Common myeloid progenitor, CD34-positive (primary cell): ENCODE measurements at regions of chr12 and their contacts with region 1.

Region 1: DNA sequence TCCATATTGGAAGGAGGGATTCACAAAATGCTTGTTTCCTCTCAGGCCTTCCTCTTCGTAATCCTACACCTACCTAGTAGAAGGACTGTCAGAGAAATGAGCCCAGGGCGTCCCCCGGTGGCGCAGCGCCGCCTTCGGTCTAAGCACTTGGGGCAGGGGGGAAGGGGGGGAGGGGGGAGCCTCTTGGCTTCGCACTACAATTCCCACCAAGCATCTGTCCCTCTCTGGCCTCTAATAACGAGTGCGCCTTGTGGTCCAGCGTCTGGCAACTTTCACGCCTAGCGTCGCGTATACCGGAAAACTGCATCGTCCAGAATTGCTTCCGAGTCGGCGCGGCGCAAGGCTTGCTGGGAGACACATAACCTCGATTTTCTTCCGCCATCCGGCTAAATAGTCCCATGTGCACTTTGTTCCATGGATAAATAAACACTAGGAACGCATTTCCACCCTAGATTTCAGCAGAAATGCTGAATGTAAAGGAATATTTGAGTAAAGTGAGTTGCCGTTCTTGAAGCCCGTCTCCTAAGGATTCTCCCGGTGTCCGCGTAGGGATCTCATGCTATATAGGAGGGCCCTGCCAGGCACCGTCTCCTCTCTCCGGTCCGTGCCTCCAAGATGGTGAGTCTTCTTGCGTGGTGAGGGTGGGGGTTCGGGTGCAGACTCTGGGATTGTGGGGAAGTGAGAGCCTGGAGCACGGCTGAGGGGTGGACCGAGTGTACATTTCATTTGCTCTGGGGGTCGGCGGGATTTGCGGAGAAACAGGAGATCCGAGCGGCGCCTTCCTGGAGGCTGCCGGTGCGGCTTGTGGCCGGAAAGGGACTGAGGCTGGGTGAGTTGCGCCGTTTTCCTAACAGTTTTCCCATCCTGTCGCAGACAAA is at the start of gene RPS26:
- DNase-seq: peak; percentile 99 to 100 (median 100)
- H3K4me3 ChIP-seq: peak within 1 kb of the TSS; percentile 89 to 99 (median 97)
- H3K27ac ChIP-seq: peak within 1 kb of the TSS; percentile 92 to 97
- H3K4me1 ChIP-seq: peaks cover 6 to 24% (median 15%) of the 10 kb centered on the region in 4 experiments
- H3K27me3 ChIP-seq: no peaks in the 10 kb centered on the region

Region 2: DNA sequence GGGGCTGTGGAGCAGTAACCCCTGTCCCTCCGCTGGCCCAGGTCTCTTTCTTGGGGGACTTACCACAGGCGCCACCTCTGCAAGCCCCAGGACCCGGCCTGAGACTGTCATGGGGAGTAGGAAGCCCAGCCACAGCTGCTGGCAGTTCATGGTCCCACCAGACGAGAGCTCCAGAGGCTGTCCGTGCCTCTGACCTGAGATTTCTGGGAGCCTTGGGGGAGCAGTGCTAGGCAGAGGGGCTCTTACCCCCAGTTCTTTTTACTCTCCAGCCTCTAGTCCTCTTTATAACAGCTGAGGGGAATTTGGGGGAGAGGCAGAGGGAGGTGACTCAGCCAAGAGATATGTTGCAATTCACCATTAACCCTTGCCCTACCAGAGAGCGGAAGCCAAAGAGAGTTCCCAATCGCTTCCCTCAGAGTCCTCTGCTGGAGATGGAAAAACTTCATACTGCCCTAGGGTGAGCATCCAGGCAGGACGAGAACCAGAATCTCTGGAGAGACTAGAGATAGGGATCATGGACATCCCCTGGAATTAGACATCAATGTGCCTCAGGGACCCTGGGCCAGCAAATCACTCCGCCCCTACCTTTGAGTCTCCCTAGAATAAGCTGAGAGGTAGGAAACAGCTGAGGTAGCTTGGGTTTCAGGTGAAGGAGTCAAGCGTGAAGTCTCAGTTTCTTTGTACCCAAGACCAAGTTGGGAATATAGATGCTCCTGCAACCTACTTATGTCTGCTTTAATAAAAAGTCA is 198.9 kb before region 1 on chr12 and contains the start of gene MMP19:
- CTCF ChIA-PET with region 1: no interaction called
- POLR2A ChIA-PET with region 1: no interaction called
- DNase-seq: peak in 2 of 3 donors; percentile 24 to 27
- H3K4me3 ChIP-seq: no peak within 1 kb of the TSS
- H3K27ac ChIP-seq: no peak within 1 kb of the TSS
- H3K4me1 ChIP-seq: peaks cover 0 to 18% (median 8%) of the 10 kb centered on the region in 4 experiments
- H3K27me3 ChIP-seq: peaks cover 0 to 1% (median 0%) of the 10 kb centered on the region in 5 experiments

Region 3: GRCh38 chr12:56007564-56008559 is 33.9 kb before region 1 on chr12:
- CTCF ChIA-PET with region 1: interaction called, 12 read pairs
- POLR2A ChIA-PET with region 1: no interaction called
- DNase-seq: peak in 2 of 3 donors; percentile 33 to 42
- H3K4me3 ChIP-seq: peak overlapping the region; percentile 55 to 88 (median 73)
- H3K27ac ChIP-seq: peak overlapping the region in 1 of 2 experiments; percentile 67
- H3K4me1 ChIP-seq: peaks cover 5 to 27% (median 15%) of the 10 kb centered on the region in 4 experiments
- H3K27me3 ChIP-seq: no peaks in the 10 kb centered on the region

Region 4: DNA sequence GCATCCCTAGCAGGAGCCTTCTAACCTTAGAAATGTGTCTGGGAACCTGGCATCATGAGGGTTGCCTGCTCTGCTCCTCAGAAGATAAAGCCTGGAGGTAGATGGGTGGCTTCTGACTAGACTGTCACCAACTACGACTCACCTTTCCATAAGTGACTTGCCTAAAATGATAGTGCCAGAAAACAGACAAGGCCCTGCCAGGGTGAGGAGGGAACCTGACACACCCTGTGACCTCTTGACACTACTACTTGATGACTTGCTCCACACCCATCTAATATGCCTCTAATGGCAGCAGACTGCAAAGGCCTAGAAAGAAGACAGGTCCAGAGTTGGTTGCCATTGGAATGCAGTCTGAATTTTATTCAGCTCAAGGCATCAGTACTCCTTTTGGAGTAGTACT is 170.6 kb after region 1 on chr12:
- CTCF ChIA-PET with region 1: no interaction called
- POLR2A ChIA-PET with region 1: no interaction called
- DNase-seq: no peak
- H3K4me3 ChIP-seq: no peak overlapping the region
- H3K27ac ChIP-seq: no peak overlapping the region
- H3K4me1 ChIP-seq: no peaks in the 10 kb centered on the region
- H3K27me3 ChIP-seq: no peaks in the 10 kb centered on the region